ENCODE measurements at regions of chr10 and their contacts with region 1.

Region 1: GRCh38 chr10:114631666-114632417 is 26.2 kb downstream of the ABLIM1 start:
- DNase-seq: peak; percentile 57 to 58
- ATAC-seq: peak; percentile 58 to 69 (median 61)
- H3K4me3 ChIP-seq: peak overlapping the region; percentile 45 to 80 (median 62)
- H3K27ac ChIP-seq: peak overlapping the region; percentile 81 to 95 (median 86)
- H3K4me1 ChIP-seq: peaks cover 8 to 93% (median 62%) of the 10 kb centered on the region in 9 donors
- H3K27me3 ChIP-seq: peaks cover 0 to 37% (median 0%) of the 10 kb centered on the region in 7 donors
- CTCF ChIP-seq: peak in 1 of 9 donors; percentile 13

Region 2: GRCh38 chr10:114556236-114557122 is 75.4 kb before region 1 on chr10:
- intact Hi-C with region 1: loop called in 4 of 10 experiments (anchors 5 kb)
- DNase-seq: no peak
- ATAC-seq: peak in 5 of 8 donors; percentile 14 to 62 (median 46)
- H3K4me3 ChIP-seq: no peak overlapping the region
- H3K27ac ChIP-seq: peak overlapping the region in 9 of 10 donors; percentile 57 to 78 (median 68)
- H3K4me1 ChIP-seq: peaks cover 10 to 98% (median 69%) of the 10 kb centered on the region in 9 donors
- H3K27me3 ChIP-seq: no peaks in the 10 kb centered on the region
- CTCF ChIP-seq: no peak